ENCODE measurements at regions of chr19 and their contacts with region 1.

Region 1: DNA sequence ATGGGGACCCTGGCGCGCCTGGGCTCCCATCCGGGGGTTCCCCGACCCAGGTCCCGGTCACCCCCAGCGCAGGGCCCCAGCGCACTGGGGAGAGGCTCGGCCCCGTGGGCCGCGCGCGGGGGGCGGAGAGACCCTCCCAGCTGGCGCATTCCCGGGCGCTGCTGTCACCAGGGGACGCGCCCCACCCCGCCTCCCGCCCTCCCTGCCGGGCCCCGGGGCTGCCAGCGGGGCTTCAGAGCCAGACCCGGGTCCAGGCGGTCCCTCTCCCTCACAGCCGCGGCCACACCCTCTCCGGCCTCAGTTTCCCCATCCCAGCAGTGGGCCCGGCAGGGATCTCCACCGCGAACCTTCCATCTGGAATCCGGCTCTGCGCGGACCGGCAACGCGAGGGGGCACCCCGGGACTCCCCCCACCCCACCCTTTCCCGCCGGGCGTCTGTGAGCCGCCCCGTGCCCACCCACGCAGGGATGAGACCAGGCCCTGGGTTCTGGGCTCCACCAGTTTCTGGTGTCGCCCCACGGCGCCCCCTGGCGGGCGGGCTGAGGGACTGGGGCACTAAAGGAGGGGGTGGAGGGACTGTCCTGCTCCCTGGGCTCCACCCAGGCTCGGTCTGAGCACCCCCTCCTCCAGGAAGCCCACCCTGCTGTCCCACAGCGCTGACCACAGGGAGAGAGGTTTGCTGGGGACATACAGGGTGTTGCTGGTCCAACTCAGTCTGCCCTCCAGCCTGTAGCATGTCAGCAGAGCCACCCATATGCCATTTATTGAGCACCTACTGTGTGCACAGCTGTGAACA is 878 bp upstream of the ADAMTSL5 start:
- DNase-seq: peak; percentile 83 to 93 (median 89)
- ATAC-seq: peak; percentile 91
- H3K4me3 ChIP-seq: peak overlapping the region; percentile 85
- H3K27ac ChIP-seq: peak overlapping the region; percentile 76; the same call in 1 of the 3 replicates
- H3K4me1 ChIP-seq: peaks cover 0 to 46% of the 10 kb centered on the region in 2 experiments
- H3K27me3 ChIP-seq: no peaks in the 10 kb centered on the region
- CTCF ChIP-seq: peak; percentile 83 to 89 (median 88)
- EP300 ChIP-seq: no peak
- POLR2A ChIP-seq: no peak
- RAD21 ChIP-seq: peak; percentile 45 to 67; a peak in 3 of 4 replicates

Region 2: DNA sequence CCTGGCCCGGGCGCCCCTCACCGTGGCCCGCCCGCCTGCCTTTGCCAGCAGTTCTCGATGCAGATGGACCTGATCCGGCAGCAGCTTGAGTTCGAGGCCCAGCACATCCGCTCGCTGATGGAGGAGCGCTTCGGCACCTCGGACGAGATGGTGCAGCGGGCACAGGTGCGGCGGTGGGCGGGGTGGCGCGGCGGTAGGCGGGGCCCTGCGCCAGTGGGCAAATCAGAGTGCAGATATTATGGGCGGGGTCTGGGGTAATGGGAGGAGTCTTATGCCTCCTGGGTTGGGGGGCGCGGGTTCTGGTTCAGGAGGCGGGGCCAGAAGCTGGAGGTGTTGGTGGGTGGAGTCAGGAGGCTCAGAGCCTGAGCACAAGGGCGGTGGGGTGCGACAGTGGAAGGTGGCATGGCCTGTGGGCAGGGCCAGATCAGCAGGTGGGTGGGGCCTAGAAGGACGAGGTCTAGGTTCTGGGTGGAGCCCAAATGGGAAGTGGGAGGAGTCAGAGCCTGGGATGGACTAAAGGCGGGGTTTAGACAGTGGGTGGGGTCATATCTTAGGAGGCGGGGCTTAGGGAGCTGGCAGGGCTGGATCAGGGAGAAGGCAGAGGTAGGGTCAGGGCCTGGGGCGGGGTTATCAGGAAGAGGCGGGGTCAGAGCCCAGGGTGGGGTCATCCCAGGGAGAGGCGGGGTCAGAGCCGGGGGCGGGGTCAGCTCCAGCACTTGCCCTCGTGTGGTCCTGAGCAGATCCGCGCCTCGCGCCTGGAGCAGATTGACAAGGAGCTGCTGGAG is 58.2 kb before region 1 on chr19:
- CTCF ChIA-PET with region 1: no interaction called
- POLR2A ChIA-PET with region 1: no interaction called
- in situ Hi-C with region 1: loop called (anchors 5 kb)
- intact Hi-C with region 1: loop called (anchors 5 kb)
- DNase-seq: peak; percentile 92 to 98 (median 97)
- ATAC-seq: peak; percentile 92
- H3K4me3 ChIP-seq: peak overlapping the region; percentile 39
- H3K27ac ChIP-seq: no peak overlapping the region
- H3K4me1 ChIP-seq: peaks cover 5 to 73% of the 10 kb centered on the region in 2 experiments; a peak in 4 of 5 replicates
- H3K27me3 ChIP-seq: peaks cover 0 to 9% of the 10 kb centered on the region in 2 experiments; a peak in 1 of 5 replicates
- CTCF ChIP-seq: no peak; a peak in 1 of 6 replicates
- EP300 ChIP-seq: no peak
- POLR2A ChIP-seq: peak; percentile 60; the same call in 1 of the 2 replicates
- RAD21 ChIP-seq: no peak

Region 3: GRCh38 chr19:1478934-1479707 is 34.6 kb before region 1 on chr19 and contains the start of gene C19orf25:
- CTCF ChIA-PET with region 1: no interaction called
- POLR2A ChIA-PET with region 1: no interaction called
- in situ Hi-C with region 1: no loop called
- intact Hi-C with region 1: loop called (anchors 2 kb)
- DNase-seq: peak; percentile 87 to 97 (median 90)
- ATAC-seq: peak; percentile 92
- H3K4me3 ChIP-seq: peak within 1 kb of the TSS; percentile 97
- H3K27ac ChIP-seq: peak within 1 kb of the TSS; percentile 94
- H3K4me1 ChIP-seq: peaks cover 5 to 77% of the 10 kb centered on the region in 2 experiments; a peak in 4 of 5 replicates
- H3K27me3 ChIP-seq: no peaks in the 10 kb centered on the region
- CTCF ChIP-seq: 0 out of 6 replicates have a peak, but pooled peaks of 1 of the 3 experiments have one; percentile 0
- EP300 ChIP-seq: no peak
- POLR2A ChIP-seq: peak; percentile 95
- RAD21 ChIP-seq: 0 out of 4 replicates have a peak, but pooled peaks of 1 of the 2 experiments have one; percentile 15
- polyA plus RNA-seq, gene C19orf25: 0.79 to 4.5 TPM